Ovary (tissue), 10 donors: ENCODE measurements at regions of chr2 and their contacts with region 1.

Region 1: DNA sequence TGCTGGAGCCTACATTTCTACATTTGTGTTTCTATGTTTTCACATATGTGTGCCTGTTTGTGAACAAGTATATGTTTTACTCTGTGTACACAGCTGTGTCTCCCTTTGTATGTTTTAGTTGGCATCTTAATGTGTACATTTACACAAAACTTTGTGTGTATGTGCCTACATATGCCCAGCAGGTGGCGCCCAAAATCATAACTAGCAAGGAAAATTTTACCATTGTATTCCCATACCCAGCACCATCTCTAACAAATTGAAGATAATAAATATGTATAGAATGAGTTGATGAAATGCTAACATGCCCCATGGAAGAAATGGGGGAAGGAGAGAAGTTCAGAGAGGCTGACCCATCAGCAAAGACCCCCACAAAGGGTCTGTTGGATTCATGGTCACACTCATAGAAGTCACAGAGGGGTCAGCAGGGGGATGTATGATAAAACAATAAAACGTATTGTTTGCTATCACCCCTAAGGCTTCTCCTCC is 48.1 kb downstream of the PKDCC start:
- DNase-seq: peak; percentile 65 to 85 (median 82)
- H3K4me3 ChIP-seq: no peak overlapping the region
- H3K27ac ChIP-seq: no peak overlapping the region
- H3K4me1 ChIP-seq: peaks cover 1% of the 10 kb centered on the region
- H3K27me3 ChIP-seq: no peaks in the 10 kb centered on the region
- CTCF ChIP-seq: peak; percentile 55 to 96 (median 92)
- EP300 ChIP-seq: no peak
- POLR2A ChIP-seq: no peak

Region 2: GRCh38 chr2:41994207-41994606 is 101.8 kb before region 1 on chr2:
- intact Hi-C with region 1: no loop called
- DNase-seq: no peak
- H3K4me3 ChIP-seq: no peak overlapping the region
- H3K27ac ChIP-seq: no peak overlapping the region
- H3K4me1 ChIP-seq: peaks cover 13% of the 10 kb centered on the region
- H3K27me3 ChIP-seq: no peaks in the 10 kb centered on the region
- CTCF ChIP-seq: no peak
- EP300 ChIP-seq: no peak
- POLR2A ChIP-seq: no peak

Region 3: GRCh38 chr2:42196403-42197267 is 100.7 kb after region 1 on chr2:
- intact Hi-C with region 1: loop called in 2 of 4 experiments (anchors 10 kb)
- DNase-seq: peak in 1 of 5 donors; percentile 29
- H3K4me3 ChIP-seq: no peak overlapping the region
- H3K27ac ChIP-seq: no peak overlapping the region
- H3K4me1 ChIP-seq: peaks cover 11% of the 10 kb centered on the region
- H3K27me3 ChIP-seq: no peaks in the 10 kb centered on the region
- CTCF ChIP-seq: no peak
- EP300 ChIP-seq: no peak
- POLR2A ChIP-seq: no peak

Region 4: DNA sequence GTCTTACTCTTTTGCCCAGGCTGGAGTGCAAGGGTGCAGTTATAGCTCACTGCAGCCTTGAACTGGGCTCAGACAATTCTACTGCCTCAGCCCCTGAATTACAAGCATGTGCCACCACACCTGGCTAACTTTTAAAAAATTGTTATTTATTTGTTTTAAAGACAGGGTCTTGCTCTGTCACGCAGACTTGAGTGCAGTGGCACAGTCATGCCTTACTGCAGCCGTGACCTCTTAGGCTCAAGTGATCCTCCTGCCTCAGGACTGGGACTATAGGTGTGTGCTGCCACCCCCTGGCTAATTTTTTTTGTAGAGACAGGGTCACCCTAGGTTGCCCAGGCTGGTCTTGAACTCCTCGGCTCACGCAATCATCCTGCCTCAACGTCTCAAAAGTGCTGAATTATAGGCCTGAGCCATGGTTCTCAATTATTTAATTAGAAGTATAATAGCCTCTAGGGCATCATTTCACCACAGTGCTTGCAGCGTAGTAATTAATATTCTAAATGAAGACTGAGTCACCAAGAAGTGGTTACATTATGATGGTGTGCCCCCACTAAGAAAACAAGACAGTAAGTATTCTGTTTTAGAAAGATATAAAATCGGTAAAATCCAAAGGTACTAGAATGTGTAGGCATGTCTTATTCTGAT is 142.8 kb after region 1 on chr2:
- intact Hi-C with region 1: loop called in 1 of 4 experiments (anchors 1 kb)
- DNase-seq: peak in 2 of 5 donors; percentile 17 to 45
- H3K4me3 ChIP-seq: no peak overlapping the region
- H3K27ac ChIP-seq: no peak overlapping the region
- H3K4me1 ChIP-seq: peaks cover 3% of the 10 kb centered on the region
- H3K27me3 ChIP-seq: no peaks in the 10 kb centered on the region
- CTCF ChIP-seq: peak in 2 of 3 donors; percentile 19 to 50
- EP300 ChIP-seq: no peak
- POLR2A ChIP-seq: no peak

Region 5: GRCh38 chr2:42328148-42328833 is 232.3 kb after region 1 on chr2:
- intact Hi-C with region 1: loop called in 3 of 4 experiments (anchors 2 to 10 kb)
- DNase-seq: no peak
- H3K4me3 ChIP-seq: no peak overlapping the region
- H3K27ac ChIP-seq: no peak overlapping the region
- H3K4me1 ChIP-seq: peaks cover 7% of the 10 kb centered on the region
- H3K27me3 ChIP-seq: no peaks in the 10 kb centered on the region
- CTCF ChIP-seq: peak in 2 of 3 donors; percentile 33 to 61
- EP300 ChIP-seq: no peak
- POLR2A ChIP-seq: no peak

Region 6: GRCh38 chr2:42339191-42339912 is 243.4 kb after region 1 on chr2:
- intact Hi-C with region 1: loop called in 1 of 4 experiments (anchors 10 kb)
- DNase-seq: no peak
- H3K4me3 ChIP-seq: no peak overlapping the region
- H3K27ac ChIP-seq: no peak overlapping the region
- H3K4me1 ChIP-seq: peaks cover 10% of the 10 kb centered on the region
- H3K27me3 ChIP-seq: no peaks in the 10 kb centered on the region
- CTCF ChIP-seq: no peak
- EP300 ChIP-seq: no peak
- POLR2A ChIP-seq: no peak

Region 7: DNA sequence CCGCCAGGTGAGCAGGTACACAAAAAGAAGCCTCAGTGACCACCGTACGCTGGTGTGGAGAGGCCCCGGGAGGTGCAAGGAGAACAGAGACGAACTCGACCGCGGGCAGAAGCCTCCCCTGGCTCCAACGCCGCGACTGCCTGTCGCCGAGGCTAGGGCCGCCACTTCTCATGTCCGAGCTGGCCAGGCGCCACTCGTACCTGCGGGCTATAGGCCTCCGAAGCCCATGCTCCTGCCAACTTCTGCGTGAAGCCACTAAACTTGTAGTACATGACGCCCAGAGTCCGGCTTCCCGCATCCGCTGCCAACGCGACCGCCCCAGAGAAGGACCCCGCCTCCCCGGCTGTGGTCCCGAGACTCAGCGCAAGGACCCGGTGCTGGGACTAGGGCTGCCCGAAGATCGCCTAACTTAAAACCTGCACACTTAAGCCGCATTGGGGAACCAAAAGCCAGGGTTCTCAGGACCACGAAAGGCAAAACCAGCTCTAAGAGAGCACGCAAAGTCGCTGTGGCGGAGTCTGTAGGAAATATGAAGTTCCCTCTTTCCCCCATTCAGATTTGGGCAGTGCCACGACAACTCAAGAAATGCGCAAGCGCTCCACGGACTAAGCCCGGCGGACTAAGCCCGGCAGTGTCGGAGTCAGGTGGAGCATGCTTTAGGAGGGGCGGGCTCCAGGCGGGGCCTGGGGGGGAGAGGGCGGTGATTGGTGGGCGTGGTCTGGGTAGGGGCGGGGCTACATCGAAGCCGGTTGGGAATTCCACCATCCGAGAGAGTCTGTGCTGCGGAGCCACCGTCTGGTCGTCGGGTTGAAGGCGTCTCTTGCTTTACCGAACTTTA is 265.1 kb after region 1 on chr2 and contains the start of gene COX7A2L:
- intact Hi-C with region 1: loop called (anchors 1 to 10 kb)
- DNase-seq: peak; percentile 97 to 99 (median 98)
- H3K4me3 ChIP-seq: peak within 1 kb of the TSS; percentile 99
- H3K27ac ChIP-seq: peak within 1 kb of the TSS; percentile 70 to 89
- H3K4me1 ChIP-seq: peaks cover 5% of the 10 kb centered on the region
- H3K27me3 ChIP-seq: no peaks in the 10 kb centered on the region
- CTCF ChIP-seq: peak in 2 of 3 donors; percentile 18 to 38
- EP300 ChIP-seq: no peak
- POLR2A ChIP-seq: peak; percentile 81
- total RNA-seq, gene COX7A2L: 130 to 294 (median 162) TPM

Region 8: GRCh38 chr2:42494355-42495233 is 398.6 kb after region 1 on chr2:
- intact Hi-C with region 1: loop called in 1 of 4 experiments (anchors 10 kb)
- DNase-seq: peak; percentile 65 to 84 (median 79)
- H3K4me3 ChIP-seq: peak overlapping the region; percentile 40
- H3K27ac ChIP-seq: peak overlapping the region; percentile 77 to 92
- H3K4me1 ChIP-seq: peaks cover 1% of the 10 kb centered on the region
- H3K27me3 ChIP-seq: no peaks in the 10 kb centered on the region
- CTCF ChIP-seq: peak; percentile 68 to 87 (median 69)
- EP300 ChIP-seq: no peak
- POLR2A ChIP-seq: no peak